Common myeloid progenitor, CD34-positive (primary cell): ENCODE measurements at regions of chr20 and their contacts with region 1.

Region 1: GRCh38 chr20:8131598-8132483 is at the start of gene PLCB1:
- DNase-seq: peak; percentile 89 to 95 (median 95)
- H3K4me3 ChIP-seq: peak within 1 kb of the TSS; percentile 85 to 97 (median 90)
- H3K27ac ChIP-seq: peak within 1 kb of the TSS in 1 of 2 experiments; percentile 53
- H3K4me1 ChIP-seq: peaks cover 18 to 38% (median 26%) of the 10 kb centered on the region in 4 experiments
- H3K27me3 ChIP-seq: peaks cover 0 to 3% (median 0%) of the 10 kb centered on the region in 5 experiments

Region 2: DNA sequence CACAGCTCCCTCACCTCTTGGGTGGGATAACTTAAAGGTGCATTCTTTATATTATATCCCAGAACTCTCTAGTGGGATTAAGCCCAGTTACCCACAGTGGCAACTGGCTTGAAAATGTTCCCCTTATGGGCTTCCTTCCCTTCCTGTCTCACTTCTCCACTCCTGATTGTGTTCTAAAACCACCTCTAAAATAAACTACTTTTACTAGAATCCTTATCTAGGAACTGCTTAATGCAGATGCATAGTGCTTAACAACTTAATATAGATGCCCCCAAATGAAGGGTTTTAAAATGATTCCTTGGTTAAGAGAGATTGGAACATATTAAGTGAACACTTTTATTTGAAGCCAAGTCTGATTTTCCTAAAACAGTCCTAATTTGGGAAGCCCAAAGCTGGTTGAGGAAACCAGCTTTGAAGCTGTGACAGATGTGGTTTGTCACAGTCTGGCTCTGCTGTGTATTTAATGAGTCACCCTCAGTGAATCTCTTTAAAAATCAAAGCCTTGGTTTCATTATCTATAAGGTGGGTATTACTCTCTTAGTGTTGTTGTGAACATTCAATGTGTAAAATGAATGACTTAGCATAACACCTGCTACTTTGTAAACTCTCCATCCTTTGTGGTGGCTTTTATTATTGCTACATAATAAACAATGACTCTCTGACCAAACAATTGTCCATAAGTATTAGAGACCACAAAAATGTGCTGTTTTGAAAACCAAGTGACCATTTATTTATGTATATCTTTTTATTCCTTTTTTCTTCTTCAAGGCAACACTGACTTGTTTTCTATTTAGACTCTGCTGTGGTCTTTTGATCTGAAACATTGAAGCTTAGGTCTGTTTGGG is 24.6 kb after region 1 on chr20:
- CTCF ChIA-PET with region 1: interaction called, 39 read pairs
- POLR2A ChIA-PET with region 1: no interaction called
- DNase-seq: peak in 2 of 3 donors; percentile 63 to 80
- H3K4me3 ChIP-seq: peak overlapping the region in 1 of 7 experiments; percentile 12
- H3K27ac ChIP-seq: no peak overlapping the region
- H3K4me1 ChIP-seq: peaks cover 38 to 64% (median 55%) of the 10 kb centered on the region in 4 experiments
- H3K27me3 ChIP-seq: no peaks in the 10 kb centered on the region

Region 3: DNA sequence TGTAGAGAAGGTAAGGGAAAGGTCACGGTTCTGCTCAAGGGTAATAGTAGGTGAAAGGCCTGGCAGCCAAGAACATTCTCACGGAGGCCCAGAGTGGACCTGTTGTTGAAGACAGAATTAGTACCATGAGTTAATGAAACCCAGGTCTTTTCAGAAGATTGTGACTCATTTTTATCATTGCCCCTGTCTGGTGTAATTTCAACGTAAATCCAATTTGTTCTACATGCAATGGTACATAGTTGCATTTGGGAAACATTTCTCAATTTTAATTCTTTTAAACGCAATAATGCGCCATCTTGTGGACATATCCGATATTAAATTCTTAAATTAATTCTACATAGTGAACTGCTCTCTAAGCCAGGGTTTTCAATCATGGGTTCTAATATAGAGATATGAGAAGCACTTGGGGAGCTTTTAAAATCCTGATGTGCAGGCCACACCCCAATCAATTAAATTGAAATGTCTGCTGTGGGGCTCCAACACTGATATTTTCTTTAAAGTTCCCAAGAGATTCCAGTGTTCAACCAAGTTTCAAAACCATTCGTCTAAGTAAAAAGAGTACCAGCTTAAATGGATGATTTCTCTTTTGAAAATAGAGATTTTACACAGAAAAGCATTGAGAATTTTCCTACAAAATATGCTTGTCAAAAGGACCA is 257.7 kb after region 1 on chr20:
- CTCF ChIA-PET with region 1: interaction called, 10 read pairs
- POLR2A ChIA-PET with region 1: no interaction called
- DNase-seq: peak; percentile 59 to 78 (median 73)
- H3K4me3 ChIP-seq: no peak overlapping the region
- H3K27ac ChIP-seq: no peak overlapping the region
- H3K4me1 ChIP-seq: peaks cover 0 to 22% (median 11%) of the 10 kb centered on the region in 4 experiments
- H3K27me3 ChIP-seq: no peaks in the 10 kb centered on the region